HEK293 (cell line): ENCODE measurements at regions of chr1 and their contacts with region 1.

Region 1: GRCh38 chr1:110087812-110088738 is 17.6 kb upstream of the ALX3 start:
- H3K4me3 ChIP-seq: no peak overlapping the region
- H3K27ac ChIP-seq: no peak overlapping the region
- H3K4me1 ChIP-seq: no peaks in the 10 kb centered on the region
- CTCF ChIP-seq: peak; percentile 40; the same call in 1 of the 2 replicates

Region 2: GRCh38 chr1:110070282-110070669 is 17.8 kb before region 1 on chr1:
- CTCF ChIA-PET with region 1: interaction called, 14 read pairs
- POLR2A ChIA-PET with region 1: no interaction called
- H3K4me3 ChIP-seq: no peak overlapping the region
- H3K27ac ChIP-seq: no peak overlapping the region
- H3K4me1 ChIP-seq: no peaks in the 10 kb centered on the region
- CTCF ChIP-seq: no peak

Region 3: DNA sequence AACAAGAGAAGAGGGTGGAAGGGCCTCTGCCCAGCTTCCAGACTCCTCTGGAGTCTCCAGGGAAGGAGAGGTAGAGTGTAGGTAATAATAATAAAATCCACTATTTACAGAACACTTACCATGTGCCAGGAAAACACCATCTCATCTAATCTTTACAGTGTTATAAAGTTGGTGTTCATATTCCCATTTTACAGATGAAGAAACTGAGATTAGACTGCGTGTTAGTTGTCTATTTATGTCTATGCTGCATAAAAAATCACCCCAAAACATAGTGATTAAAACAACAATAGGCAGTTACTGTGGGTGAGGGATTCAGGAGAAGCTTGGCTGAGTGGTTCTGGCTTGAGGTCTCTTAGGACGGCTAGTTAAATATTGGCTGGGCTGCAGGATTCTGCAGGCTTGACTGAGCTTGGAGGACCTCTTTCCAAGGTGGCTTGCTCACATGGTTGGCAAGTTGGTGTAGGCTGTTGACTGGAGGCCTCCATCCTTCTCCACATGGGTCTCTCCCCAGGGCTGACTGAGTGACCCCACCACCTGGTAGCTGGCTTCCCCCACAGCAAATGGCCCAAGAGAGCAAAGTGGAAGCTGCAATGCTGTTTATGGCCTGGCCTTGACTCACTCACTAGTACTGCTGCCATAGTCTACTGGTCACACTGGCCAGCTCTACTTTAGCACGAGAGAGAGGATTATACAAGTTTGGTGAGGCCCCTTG is 11.1 kb before region 1 on chr1:
- CTCF ChIA-PET with region 1: interaction called, 14 read pairs
- POLR2A ChIA-PET with region 1: no interaction called
- H3K4me3 ChIP-seq: no peak overlapping the region
- H3K27ac ChIP-seq: no peak overlapping the region
- H3K4me1 ChIP-seq: no peaks in the 10 kb centered on the region
- CTCF ChIP-seq: no peak

Region 4: DNA sequence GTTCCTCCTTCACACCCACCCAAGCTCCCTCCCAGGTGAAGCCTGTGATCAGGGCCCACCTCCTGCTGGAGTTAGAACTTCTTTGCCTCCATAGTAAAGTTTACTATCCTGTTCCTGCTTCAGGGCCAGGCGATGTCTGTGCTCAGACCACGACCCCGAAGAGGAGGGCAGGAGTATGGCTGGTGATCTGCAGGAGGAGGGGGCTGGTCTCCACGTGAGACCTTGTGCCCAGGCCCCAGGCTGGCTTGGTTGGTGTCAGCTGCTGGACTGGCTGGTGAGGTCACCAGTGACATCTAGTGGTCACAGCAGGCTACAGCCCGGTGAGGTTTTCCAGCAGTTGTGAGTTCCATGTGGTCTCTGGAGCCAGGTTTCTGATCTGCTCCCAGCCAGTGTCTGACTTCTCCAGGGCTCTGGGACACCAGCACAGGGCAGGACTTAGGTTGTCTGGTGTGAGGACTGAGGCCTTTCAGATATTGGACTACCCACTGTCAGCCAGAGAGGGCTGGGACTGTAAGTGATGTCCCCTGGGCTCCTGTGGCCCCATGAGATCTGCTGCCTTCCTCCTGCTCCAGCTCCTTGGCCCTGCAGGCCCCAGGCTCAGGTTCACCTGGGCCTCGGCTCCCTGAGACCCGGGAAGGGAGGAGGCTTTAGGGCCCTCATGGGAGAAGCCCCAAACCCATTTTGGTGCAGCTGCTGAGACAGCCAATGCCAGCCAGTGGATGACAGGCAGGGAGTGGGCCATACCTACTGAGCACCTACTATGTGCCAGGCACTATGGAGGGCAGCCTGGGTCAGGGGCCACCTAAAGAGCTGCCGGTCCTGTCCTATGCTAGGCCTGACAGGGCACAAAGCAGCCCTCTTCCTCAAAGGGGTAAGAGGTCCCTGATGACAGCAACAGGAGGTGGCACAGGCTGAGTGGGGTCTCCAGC is 18.2 kb after region 1 on chr1:
- CTCF ChIA-PET with region 1: interaction called, 182 read pairs
- POLR2A ChIA-PET with region 1: no interaction called
- H3K4me3 ChIP-seq: no peak overlapping the region
- H3K27ac ChIP-seq: no peak overlapping the region
- H3K4me1 ChIP-seq: no peaks in the 10 kb centered on the region
- CTCF ChIP-seq: peak; percentile 87

Region 5: DNA sequence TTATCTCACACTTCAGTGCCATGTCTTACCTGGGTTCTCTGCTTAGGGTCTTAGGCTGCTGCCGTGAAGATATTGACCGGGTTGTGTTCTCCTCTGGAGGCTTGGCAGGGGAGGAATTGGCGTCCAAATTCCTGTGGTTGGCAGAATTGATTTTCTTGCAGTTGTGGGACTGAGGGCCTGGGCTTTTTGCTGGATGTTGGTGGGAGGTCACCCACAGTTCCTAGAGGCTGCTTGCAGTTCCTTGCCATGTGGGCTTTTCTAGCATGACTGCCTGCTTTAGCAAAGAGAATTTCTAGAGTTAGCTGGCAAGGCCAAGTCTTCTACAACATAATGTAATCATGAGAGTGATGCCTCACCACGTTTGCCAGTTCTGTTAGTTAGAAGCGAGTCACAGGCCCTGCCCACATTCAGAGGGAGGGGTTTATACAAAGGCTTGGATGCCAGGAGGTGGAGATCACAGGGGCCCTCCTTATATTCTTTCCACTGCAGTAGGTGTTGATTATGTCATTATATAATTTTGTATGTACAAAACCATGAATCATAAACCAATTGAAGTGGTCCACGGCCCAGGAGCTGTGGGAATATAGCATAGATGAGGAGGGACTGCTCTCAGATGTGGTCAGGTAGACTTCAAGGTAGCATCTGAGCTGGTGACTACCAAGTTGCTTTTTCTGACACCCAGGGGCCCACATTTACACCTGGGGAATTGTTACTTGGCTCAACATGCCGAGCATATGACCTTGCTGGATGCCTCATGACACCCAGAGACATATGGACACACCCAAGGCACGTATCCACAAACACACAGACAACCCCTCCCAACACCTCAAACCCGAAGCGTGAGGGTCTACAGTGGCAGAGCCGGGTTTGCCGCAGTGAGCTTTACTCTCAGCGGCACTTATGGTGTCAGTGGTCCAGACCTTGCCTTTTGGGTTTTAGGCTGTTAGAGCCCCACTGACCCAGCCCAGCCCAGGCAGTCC is 30.9 kb after region 1 on chr1:
- CTCF ChIA-PET with region 1: interaction called, 20 read pairs
- POLR2A ChIA-PET with region 1: no interaction called
- H3K4me3 ChIP-seq: no peak overlapping the region
- H3K27ac ChIP-seq: no peak overlapping the region
- H3K4me1 ChIP-seq: no peaks in the 10 kb centered on the region
- CTCF ChIP-seq: no peak